Activated T-helper 2 cell treated with anti-CD3 and anti-CD28 coated beads, Interferon-gamma antibody, Interleukin-2, Interleukin-4, amounts not matched to agents 10 μg/mL and 5 μg/mL and 100 μg/mL, durations not matched to agents 14 hours and 24 hours and 36 hours (primary cell): ENCODE measurements at regions of chr9 and their contacts with region 1.

Region 1: GRCh38 chr9:128881901-128882681 is at the starts of genes KYAT1 and LRRC8A:
- DNase-seq: peak; percentile 99
- H3K4me3 Mint-ChIP-seq: peak within 1 kb of the TSS; percentile 97
- H3K27ac Mint-ChIP-seq: peak within 1 kb of the TSS; percentile 92
- H3K4me1 Mint-ChIP-seq: peaks cover 39% of the 10 kb centered on the region
- H3K27me3 Mint-ChIP-seq: no peaks in the 10 kb centered on the region
- total RNA-seq, gene KYAT1: 13.6 and 14.0 TPM in 2 replicates
- total RNA-seq, gene LRRC8A: 24.9 and 25.4 TPM in 2 replicates

Region 2: GRCh38 chr9:128786681-128787601 is 95.2 kb before region 1 on chr9 and contains the start of gene TBC1D13:
- intact Hi-C with region 1: loop called (anchors 1 kb)
- DNase-seq: peak; percentile 86
- H3K4me3 Mint-ChIP-seq: peak within 1 kb of the TSS; percentile 96
- H3K27ac Mint-ChIP-seq: peak within 1 kb of the TSS; percentile 90
- H3K4me1 Mint-ChIP-seq: peaks cover 20% of the 10 kb centered on the region
- H3K27me3 Mint-ChIP-seq: no peaks in the 10 kb centered on the region
- total RNA-seq, gene TBC1D13: 20.5 and 24.2 TPM in 2 replicates

Region 3: DNA sequence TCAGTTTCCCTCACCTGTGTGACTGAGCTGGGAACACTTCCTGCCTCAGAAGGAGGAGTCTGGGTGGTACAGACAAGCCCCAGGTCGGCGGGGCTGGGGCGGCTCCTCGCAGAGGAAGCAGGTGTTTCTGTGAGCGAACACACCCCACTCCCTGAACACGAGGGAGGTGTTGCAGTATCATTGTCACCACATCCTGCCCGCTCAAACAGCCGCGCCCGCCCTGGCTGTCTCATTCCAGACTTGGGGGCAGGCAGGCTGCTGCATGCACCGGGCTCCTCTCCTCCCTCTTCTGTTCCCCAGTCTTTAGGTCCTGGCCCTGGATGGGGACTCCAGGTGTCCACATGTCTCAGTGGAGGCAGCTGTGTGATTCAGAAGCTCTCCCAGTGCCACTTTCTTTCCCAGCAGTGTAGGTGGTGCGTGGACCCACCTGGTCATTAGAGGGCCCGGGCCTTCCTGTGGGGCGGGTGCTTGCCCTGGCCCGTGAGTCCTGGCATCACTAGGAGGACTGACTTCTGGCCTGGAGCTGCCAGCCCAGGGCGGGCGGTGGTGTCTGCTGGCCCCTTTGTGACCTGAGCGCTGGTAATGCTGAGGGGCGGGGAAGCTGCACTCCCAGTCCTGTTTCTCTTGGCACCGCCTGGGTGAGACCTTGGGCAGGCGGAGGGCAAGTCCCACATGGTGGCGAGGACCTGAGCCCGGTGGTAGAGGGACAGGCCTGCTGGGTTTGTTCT is 20.4 kb after region 1 on chr9:
- intact Hi-C with region 1: loop called (anchors 2 kb)
- DNase-seq: peak; percentile 82
- H3K4me3 Mint-ChIP-seq: peak overlapping the region; percentile 53
- H3K27ac Mint-ChIP-seq: peak overlapping the region; percentile 84
- H3K4me1 Mint-ChIP-seq: peaks cover 54% of the 10 kb centered on the region
- H3K27me3 Mint-ChIP-seq: no peaks in the 10 kb centered on the region

Region 4: DNA sequence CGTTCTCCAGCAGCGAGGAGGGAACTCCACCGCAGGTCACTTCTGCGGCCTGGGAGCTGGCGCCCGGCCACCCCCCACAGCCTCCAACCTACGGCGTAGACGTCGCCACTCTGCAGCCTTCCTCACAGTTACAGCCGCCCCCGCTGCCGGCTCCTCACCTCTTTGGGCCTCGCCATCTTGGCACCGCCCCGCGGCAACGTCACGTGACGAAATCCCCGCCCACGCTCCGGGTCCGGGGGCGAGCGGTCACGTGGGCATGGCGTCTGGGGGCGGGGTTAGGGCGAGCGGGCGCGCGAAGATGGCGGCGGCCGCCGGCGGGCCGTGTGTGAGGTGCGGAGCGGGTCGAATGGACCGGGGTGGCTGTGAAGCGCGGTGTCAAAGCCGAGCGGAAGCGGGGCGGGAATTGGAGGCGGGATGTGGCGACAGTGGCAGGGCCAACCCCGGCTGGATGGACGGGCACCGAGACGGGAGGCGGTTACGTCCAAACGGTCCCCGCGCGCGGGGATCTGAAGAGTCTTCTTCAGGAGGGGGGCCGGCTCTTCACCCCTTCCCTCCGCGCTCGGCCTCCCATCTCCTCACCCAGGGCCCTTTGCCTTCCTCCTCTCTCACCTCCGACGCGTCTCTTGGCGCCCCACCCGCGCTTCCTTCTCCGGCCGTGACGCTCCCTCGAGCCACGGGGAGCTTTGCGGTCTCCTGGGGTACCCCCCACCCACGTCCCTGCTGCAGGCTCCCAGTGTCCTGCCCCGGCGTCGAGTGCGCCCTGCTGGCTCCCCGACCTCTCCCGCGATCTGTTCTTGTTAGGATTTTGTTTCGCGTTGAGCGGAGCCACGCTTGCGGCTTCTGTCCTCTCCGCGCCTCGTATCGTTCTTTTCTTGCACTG is 65.6 kb after region 1 on chr9 and contains the starts of genes DOLK and NUP188:
- intact Hi-C with region 1: loop called (anchors 1 kb)
- DNase-seq: peak; percentile 99
- H3K4me3 Mint-ChIP-seq: peak within 1 kb of the TSS; percentile 98
- H3K27ac Mint-ChIP-seq: peak within 1 kb of the TSS; percentile 98
- H3K4me1 Mint-ChIP-seq: peaks cover 18% of the 10 kb centered on the region
- H3K27me3 Mint-ChIP-seq: no peaks in the 10 kb centered on the region
- total RNA-seq, gene DOLK: 13.0 and 13.3 TPM in 2 replicates
- total RNA-seq, gene NUP188: 161 and 175 TPM in 2 replicates

Region 5: DNA sequence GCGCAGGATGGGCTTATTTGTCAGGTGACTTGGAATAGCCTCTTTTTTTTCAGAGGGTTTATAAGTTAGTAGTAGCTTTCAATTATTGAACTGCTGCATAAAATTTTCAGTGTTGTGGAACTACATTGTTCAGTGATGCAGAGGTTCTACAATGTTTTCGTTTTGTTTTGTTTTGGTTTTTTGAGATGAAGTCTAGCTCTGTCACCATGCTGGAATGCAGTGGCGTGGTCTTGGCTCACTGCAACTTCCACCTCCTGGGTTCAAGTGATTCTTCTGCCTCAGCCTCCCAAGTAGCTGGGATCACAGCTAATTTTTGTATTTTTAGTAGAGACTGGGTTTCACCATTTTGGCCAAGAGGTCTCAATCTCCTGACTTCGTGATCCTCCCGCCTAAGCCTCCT is 87.4 kb after region 1 on chr9:
- intact Hi-C with region 1: no loop called
- DNase-seq: no peak
- H3K4me3 Mint-ChIP-seq: no peak overlapping the region
- H3K27ac Mint-ChIP-seq: no peak overlapping the region
- H3K4me1 Mint-ChIP-seq: no peaks in the 10 kb centered on the region
- H3K27me3 Mint-ChIP-seq: no peaks in the 10 kb centered on the region